Activated B cell treated with CpG ODN at 0.5 μM for 24 hours (primary cell): ENCODE measurements at regions of chr2 and their contacts with region 1.

Region 1: DNA sequence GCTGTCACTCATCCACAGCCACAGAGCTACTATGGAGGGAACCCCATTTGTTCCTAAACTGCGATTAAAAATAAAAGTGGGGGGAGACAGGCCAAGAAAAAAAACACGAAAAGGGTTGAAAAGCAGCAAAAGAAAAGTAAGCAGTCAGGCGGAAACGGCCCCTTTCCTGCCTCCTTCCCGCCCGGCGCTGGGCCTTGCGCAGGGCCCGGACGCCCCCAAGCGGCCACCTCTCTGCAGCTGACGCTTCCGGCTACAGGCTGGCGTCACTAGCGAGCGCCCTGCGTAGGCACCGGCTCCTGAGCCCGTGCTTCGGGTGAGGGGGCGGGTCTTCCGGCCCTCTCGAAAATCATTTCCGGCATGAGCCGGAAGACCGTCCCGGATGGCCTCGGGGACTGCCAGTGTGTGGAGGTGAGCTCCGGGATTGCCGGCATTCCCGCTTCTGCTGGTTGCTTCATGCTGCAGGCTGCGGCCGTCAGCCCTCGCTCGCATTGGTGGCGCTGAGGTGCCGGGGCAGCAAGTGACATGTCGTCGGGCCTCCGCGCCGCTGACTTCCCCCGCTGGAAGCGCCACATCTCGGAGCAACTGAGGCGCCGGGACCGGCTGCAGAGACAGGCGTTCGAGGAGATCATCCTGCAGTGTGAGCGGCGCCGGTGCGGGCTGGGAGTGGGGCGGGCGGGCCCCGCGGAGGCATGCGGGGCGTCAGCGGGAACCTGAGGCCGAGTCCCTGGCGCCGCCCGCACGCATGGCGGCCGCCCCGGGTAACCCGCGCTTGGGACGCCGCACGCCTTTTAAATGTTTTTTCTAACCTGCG is at the start of gene ATG16L1:
- DNase-seq: peak; percentile 88
- ATAC-seq: peak; percentile 98
- H3K4me3 Mint-ChIP-seq: peak within 1 kb of the TSS; percentile 92
- H3K27ac Mint-ChIP-seq: peak within 1 kb of the TSS; percentile 91
- H3K4me1 Mint-ChIP-seq: peaks cover 53% of the 10 kb centered on the region
- H3K27me3 Mint-ChIP-seq: no peaks in the 10 kb centered on the region
- CTCF ChIP-seq: peak; percentile 57
- total RNA-seq, gene ATG16L1: 39.0 and 49.9 TPM in 2 replicates

Region 2: GRCh38 chr2:232697100-232697865 is 554.2 kb before region 1 on chr2 and contains the start of gene GIGYF2:
- CTCF ChIA-PET with region 1: no interaction called
- POLR2A ChIA-PET with region 1: no interaction called
- intact Hi-C with region 1: loop called (anchors 5 kb)
- DNase-seq: peak; percentile 89
- ATAC-seq: peak; percentile 86
- H3K4me3 Mint-ChIP-seq: peak within 1 kb of the TSS; percentile 89
- H3K27ac Mint-ChIP-seq: peak within 1 kb of the TSS; percentile 79
- H3K4me1 Mint-ChIP-seq: peaks cover 33% of the 10 kb centered on the region
- H3K27me3 Mint-ChIP-seq: no peaks in the 10 kb centered on the region
- CTCF ChIP-seq: no peak
- total RNA-seq, gene GIGYF2: 68.9 and 77.9 TPM in 2 replicates

Region 3: GRCh38 chr2:232854082-232854481 is 397.4 kb before region 1 on chr2:
- CTCF ChIA-PET with region 1: interaction called, 24 read pairs
- POLR2A ChIA-PET with region 1: interaction called, 4 read pairs
- intact Hi-C with region 1: loop called (anchors 1 kb)
- DNase-seq: no peak
- ATAC-seq: no peak
- H3K4me3 Mint-ChIP-seq: no peak overlapping the region
- H3K27ac Mint-ChIP-seq: no peak overlapping the region
- H3K4me1 Mint-ChIP-seq: no peaks in the 10 kb centered on the region
- H3K27me3 Mint-ChIP-seq: no peaks in the 10 kb centered on the region
- CTCF ChIP-seq: no peak

Region 4: DNA sequence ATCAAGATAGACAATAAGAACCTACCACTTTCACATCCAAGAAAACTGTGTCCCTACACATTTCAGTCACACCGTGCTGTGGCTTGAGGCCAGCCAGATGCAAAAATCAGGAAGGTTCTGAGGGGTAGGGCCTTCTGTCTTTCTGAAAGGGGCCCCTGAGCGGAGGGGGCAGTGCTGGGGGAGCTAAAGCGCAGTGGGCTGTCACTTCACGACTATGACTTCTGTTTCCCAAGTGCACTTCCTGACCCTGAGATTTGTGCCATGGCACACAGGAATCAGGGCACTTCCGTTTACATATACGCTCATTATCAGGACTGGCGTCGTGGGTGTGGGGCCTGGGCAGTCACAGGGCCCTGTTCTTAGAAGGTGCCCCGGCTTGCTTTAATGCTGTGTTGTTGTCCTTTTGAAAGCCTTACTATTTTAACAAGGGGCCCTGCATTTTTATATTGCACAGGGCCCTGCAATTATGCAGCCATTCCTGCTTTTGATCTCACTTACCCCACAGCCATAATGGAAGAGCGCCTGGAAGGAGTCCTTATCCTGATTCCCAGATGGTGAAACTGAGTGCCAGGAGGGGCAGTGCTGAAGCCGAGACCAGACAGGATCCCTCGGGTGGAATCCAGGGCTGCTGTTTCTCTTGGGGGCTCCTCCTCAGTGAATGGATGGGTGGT is 239.1 kb before region 1 on chr2:
- CTCF ChIA-PET with region 1: no interaction called
- POLR2A ChIA-PET with region 1: no interaction called
- intact Hi-C with region 1: no loop called
- DNase-seq: no peak
- ATAC-seq: no peak
- H3K4me3 Mint-ChIP-seq: no peak overlapping the region
- H3K27ac Mint-ChIP-seq: no peak overlapping the region
- H3K4me1 Mint-ChIP-seq: peaks cover 6% of the 10 kb centered on the region
- H3K27me3 Mint-ChIP-seq: peaks cover 3% of the 10 kb centered on the region
- CTCF ChIP-seq: no peak

Region 5: DNA sequence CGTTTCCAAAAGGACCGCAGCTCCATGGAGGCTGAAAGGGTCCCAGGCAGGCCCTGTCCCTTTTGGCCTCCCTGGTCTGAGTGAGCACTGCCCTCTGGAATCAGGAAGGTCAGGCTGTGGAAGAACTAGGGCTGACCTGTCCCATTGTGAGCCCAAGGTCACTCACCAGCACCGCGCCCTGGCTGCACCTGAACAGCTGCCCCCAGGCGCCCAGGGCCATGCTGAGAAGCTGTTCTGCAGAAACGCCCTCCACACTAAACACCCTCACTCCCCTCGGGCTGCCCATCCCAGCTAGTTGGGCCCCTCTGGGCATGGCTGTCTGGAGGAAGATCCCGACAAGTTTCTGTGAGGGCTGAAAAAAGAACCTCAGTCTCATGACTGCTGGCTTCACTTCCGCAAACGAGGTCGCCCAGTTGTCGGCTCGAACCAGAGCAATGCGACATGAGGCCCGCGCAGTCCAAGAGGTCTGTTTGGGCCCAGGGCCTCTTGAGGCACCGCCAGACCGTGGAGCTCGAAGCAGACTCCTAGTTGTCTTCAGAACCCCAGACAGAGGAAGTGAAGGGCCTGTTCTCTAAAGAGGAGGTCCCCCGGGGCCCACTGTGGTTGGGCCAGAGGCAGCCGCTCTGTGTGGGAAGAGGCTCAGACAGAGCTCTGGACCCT is 127.0 kb before region 1 on chr2:
- CTCF ChIA-PET with region 1: interaction called, 3 read pairs
- POLR2A ChIA-PET with region 1: interaction called, 6 read pairs
- intact Hi-C with region 1: loop called (anchors 5 kb)
- DNase-seq: peak; percentile 73
- ATAC-seq: peak; percentile 97
- H3K4me3 Mint-ChIP-seq: peak overlapping the region; percentile 78
- H3K27ac Mint-ChIP-seq: peak overlapping the region; percentile 92
- H3K4me1 Mint-ChIP-seq: peaks cover 52% of the 10 kb centered on the region
- H3K27me3 Mint-ChIP-seq: no peaks in the 10 kb centered on the region
- CTCF ChIP-seq: no peak

Region 6: DNA sequence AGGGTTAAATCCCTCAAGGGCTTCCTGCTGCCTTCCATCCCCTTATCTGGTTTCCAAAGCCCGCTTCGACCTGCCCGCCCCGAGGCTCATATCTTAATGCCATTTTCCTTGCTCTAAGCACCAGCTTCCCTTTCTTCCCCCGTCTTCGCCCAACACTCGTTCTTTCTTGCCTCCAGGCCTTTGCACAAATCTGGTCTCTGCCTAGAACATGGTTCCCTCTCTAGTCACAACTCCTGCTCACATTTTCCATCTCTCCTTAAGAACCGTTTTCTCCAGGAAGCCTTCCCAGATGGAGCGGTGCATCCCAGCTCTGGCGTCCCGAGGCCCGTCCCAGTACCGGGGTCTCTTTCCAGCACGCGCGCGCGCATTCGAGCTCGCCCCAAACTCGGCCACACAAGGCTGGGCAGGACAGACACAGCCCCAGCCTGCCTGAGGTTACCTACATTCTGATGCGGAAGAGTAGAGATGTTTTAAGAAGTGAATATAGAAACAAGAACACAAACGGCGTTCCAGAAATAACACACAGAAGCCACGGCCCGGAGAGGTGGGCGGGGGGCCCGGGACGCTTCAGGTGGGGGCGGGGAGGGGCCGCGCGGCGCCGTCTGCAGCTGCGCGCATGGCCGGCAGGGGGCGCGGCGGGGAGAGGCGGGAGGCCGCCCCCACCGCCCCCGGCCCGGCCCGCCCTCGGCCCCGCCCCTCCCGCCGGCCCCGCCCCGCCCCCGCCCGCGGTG is 102.4 kb after region 1 on chr2 and contains the start of gene DGKD:
- CTCF ChIA-PET with region 1: interaction called, 8 read pairs
- POLR2A ChIA-PET with region 1: interaction called, 10 read pairs
- intact Hi-C with region 1: loop called (anchors 1 kb)
- DNase-seq: peak; percentile 74
- ATAC-seq: peak; percentile 78
- H3K4me3 Mint-ChIP-seq: peak within 1 kb of the TSS; percentile 93
- H3K27ac Mint-ChIP-seq: peak within 1 kb of the TSS; percentile 100
- H3K4me1 Mint-ChIP-seq: peaks cover 88% of the 10 kb centered on the region
- H3K27me3 Mint-ChIP-seq: no peaks in the 10 kb centered on the region
- CTCF ChIP-seq: no peak
- total RNA-seq, gene DGKD: 140 and 188 TPM in 2 replicates